ENCODE measurements at regions of chr10 and their contacts with region 1.

Region 1: GRCh38 chr10:110967645-110968044 is 48.2 kb downstream of the SHOC2 start:
- DNase-seq: no peak
- ATAC-seq: no peak
- H3K4me3 ChIP-seq: no peak overlapping the region
- H3K4me3 Mint-ChIP-seq: no peak overlapping the region
- H3K27ac ChIP-seq: no peak overlapping the region
- H3K27ac Mint-ChIP-seq: no peak overlapping the region
- H3K4me1 ChIP-seq: peaks cover 6 to 9% of the 10 kb centered on the region in 2 donors
- H3K4me1 Mint-ChIP-seq: peaks cover 16 to 84% (median 77%) of the 10 kb centered on the region in 7 donors
- H3K27me3 ChIP-seq: no peaks in the 10 kb centered on the region
- H3K27me3 Mint-ChIP-seq: no peaks in the 10 kb centered on the region

Region 2: DNA sequence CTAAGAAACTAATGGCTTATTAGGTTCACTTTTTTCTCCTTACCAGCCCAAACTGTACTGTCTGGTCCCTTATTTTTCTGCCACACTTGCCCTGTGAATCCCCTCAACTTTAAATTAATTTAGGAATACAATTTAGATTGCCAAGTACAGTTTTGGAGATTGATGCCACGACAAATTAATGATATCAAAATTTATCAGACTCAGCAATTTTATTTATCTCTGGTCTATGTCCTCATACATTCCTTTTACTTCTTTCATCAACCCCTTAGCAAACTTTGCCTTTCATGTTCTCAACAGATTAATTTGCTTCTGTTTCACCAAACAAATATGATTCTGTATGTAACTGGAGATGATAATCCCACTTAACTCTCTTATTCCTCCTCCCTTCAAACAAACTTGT is 10.0 kb before region 1 on chr10:
- CTCF ChIA-PET with region 1: no interaction called
- POLR2A ChIA-PET with region 1: no interaction called
- intact Hi-C with region 1: no loop called
- DNase-seq: no peak
- ATAC-seq: no peak
- H3K4me3 ChIP-seq: no peak overlapping the region
- H3K4me3 Mint-ChIP-seq: no peak overlapping the region
- H3K27ac ChIP-seq: no peak overlapping the region
- H3K27ac Mint-ChIP-seq: no peak overlapping the region
- H3K4me1 ChIP-seq: no peaks in the 10 kb centered on the region
- H3K4me1 Mint-ChIP-seq: peaks cover 9 to 83% (median 67%) of the 10 kb centered on the region in 7 donors
- H3K27me3 ChIP-seq: no peaks in the 10 kb centered on the region
- H3K27me3 Mint-ChIP-seq: no peaks in the 10 kb centered on the region

Region 3: DNA sequence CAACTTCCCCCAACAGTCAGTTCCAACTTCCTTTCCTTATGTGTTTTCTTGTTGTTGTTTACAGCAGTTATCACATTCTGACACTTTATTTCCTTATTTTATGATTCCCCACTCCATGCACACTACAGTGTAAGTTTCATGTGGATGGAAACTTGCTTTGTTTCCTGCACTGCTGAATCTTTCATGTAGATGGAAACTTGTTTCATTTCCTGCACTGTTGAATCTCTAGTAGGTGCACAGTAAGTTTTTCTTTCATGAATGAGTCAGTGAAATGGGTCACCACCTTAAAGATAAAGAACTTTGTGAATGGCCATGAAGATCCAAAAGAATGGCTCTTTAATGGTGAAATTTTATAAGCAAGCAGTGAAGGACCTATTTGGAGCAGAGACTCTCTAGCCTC is 13.2 kb after region 1 on chr10:
- CTCF ChIA-PET with region 1: no interaction called
- POLR2A ChIA-PET with region 1: interaction called, 3 read pairs
- intact Hi-C with region 1: loop called (anchors 2 kb)
- DNase-seq: no peak
- ATAC-seq: no peak
- H3K4me3 ChIP-seq: no peak overlapping the region
- H3K4me3 Mint-ChIP-seq: peak overlapping the region in 6 of 10 donors; percentile 2 to 68 (median 20)
- H3K27ac ChIP-seq: no peak overlapping the region
- H3K27ac Mint-ChIP-seq: peak overlapping the region in 3 of 9 donors; percentile 21 to 63 (median 52)
- H3K4me1 ChIP-seq: peaks cover 0 to 3% of the 10 kb centered on the region in 2 donors
- H3K4me1 Mint-ChIP-seq: peaks cover 25 to 76% (median 64%) of the 10 kb centered on the region in 7 donors
- H3K27me3 ChIP-seq: no peaks in the 10 kb centered on the region
- H3K27me3 Mint-ChIP-seq: no peaks in the 10 kb centered on the region

Measured in naive thymus-derived CD4-positive, alpha-beta T cell (primary cell).